Calu3 (cell line): ENCODE measurements at regions of chrX and their contacts with region 1.

Region 1: GRCh38 chrX:87299563-87300160 is 217.9 kb upstream of the KLHL4 start:
- DNase-seq: peak; percentile 1
- H3K4me3 Mint-ChIP-seq: no peak overlapping the region
- H3K27ac Mint-ChIP-seq: no peak overlapping the region
- H3K4me1 Mint-ChIP-seq: no peaks in the 10 kb centered on the region
- H3K27me3 Mint-ChIP-seq: no peaks in the 10 kb centered on the region
- CTCF ChIP-seq: no peak

Region 2: GRCh38 chrX:85611926-85612325 is 1687.7 kb before region 1 on chrX:
- CTCF ChIA-PET with region 1: no interaction called
- intact Hi-C with region 1: loop called (anchors 5 kb)
- DNase-seq: no peak
- H3K4me3 Mint-ChIP-seq: no peak overlapping the region
- H3K27ac Mint-ChIP-seq: no peak overlapping the region
- H3K4me1 Mint-ChIP-seq: no peaks in the 10 kb centered on the region
- H3K27me3 Mint-ChIP-seq: no peaks in the 10 kb centered on the region
- CTCF ChIP-seq: no peak

Region 3: DNA sequence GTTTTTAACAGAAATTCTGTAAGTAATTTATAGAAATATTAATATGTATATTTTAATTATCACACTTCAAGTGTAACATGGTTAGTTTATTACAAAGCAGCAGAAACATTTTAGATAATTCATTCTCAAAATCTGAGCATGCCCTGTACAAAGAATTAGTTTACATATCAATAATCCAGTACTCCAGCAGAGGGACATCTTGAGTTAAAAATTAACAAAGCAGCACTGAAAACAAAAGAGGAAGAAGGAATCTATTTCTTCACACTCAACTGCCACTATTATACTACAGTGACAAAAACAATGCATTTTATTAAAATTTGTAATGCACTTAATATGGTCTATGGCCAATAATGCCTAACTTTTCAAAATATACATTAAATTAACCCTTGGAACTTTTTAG is 38.8 kb after region 1 on chrX:
- CTCF ChIA-PET with region 1: no interaction called
- intact Hi-C with region 1: no loop called
- DNase-seq: no peak
- H3K4me3 Mint-ChIP-seq: no peak overlapping the region
- H3K27ac Mint-ChIP-seq: no peak overlapping the region
- H3K4me1 Mint-ChIP-seq: no peaks in the 10 kb centered on the region
- H3K27me3 Mint-ChIP-seq: no peaks in the 10 kb centered on the region
- CTCF ChIP-seq: no peak

Region 4: GRCh38 chrX:87397103-87397886 is 97.6 kb after region 1 on chrX:
- CTCF ChIA-PET with region 1: no interaction called
- intact Hi-C with region 1: no loop called
- DNase-seq: no peak
- H3K4me3 Mint-ChIP-seq: no peak overlapping the region
- H3K27ac Mint-ChIP-seq: no peak overlapping the region
- H3K4me1 Mint-ChIP-seq: no peaks in the 10 kb centered on the region
- H3K27me3 Mint-ChIP-seq: no peaks in the 10 kb centered on the region
- CTCF ChIP-seq: no peak